Esophagus muscularis mucosa (tissue), 4 donors: ENCODE measurements at regions of chrX and their contacts with region 1.

Region 1: DNA sequence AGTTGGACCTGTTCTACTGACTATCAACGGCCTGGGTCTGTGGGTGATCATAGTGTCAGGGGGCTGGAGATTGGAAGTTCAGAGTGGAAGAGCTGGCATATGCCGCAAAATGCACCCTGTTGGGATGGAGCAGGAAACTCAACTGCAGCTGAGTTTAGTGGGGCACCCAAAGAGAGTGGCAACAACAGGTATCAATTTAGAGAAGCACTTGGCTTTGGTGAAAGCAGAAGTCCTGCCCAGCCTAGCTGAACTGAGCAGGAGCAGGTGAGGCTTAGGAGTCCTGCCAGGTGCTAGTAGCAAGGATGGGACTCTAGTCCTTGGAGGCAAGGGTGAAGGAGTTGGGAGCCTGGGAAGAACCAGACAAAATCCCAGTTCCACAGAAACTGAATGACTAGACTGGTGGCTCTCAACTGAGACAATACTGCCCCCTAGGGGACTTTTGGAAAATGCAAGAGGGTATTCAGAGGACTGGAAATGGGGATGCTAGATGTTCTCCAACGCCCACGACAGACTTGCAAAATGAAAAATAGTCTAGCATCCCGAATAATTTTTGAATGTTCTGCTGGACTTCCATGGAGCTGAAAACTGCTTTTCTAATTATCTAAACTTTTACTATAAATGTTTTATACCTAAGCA is 49.4 kb downstream of the RTL9 start:
- DNase-seq: no peak
- H3K4me3 ChIP-seq: no peak overlapping the region
- H3K27ac ChIP-seq: no peak overlapping the region
- H3K4me1 ChIP-seq: peaks cover 0 to 6% (median 3%) of the 10 kb centered on the region in 4 donors
- H3K27me3 ChIP-seq: peaks cover 0 to 7% (median 0%) of the 10 kb centered on the region in 4 donors
- CTCF ChIP-seq: peak; percentile 63 to 68 (median 63)
- EP300 ChIP-seq: no peak
- POLR2A ChIP-seq: no peak

Region 2: DNA sequence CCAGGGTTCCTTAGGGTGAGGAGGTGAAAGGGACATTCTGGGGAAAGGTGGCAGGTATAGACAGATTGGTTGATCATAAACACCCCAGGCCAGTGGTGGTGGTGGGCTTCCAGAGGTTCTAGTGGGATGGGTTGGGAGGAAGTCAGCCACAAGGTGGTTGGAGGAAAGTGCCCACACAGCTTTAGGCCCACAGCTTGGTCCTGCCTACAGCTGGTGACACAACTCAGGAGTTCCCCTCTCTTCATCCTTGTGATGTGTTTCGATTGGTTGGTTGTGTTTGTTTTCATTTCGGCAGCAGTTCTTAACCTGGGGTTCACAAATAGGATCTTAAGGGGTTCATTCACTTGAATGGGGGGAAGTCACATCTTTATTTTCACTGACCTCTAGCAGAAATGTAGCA is 248.2 kb before region 1 on chrX:
- intact Hi-C with region 1: loop called (anchors 2 kb)
- DNase-seq: no peak
- H3K4me3 ChIP-seq: no peak overlapping the region
- H3K27ac ChIP-seq: no peak overlapping the region
- H3K4me1 ChIP-seq: peaks cover 0 to 7% (median 2%) of the 10 kb centered on the region in 4 donors
- H3K27me3 ChIP-seq: no peaks in the 10 kb centered on the region
- CTCF ChIP-seq: no peak
- EP300 ChIP-seq: no peak
- POLR2A ChIP-seq: no peak

Region 3: DNA sequence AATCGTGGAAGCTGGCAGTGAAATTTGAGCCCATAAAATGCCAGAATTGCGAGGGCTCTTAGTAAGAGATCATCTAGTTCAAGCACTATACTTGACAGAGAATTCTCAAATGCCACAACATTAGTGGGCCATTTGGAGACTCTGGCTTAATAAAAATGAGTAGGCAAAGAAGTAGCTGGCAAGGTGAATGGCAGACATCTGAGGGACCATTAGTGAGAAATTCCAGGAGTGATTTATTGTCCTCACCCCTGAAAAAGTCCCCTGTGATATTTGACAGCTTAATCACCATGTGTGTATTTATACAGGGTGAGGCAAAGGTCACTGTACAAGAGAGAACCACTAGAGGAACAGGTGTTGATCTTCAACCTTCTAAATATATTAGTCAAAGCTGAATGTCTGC is 180.1 kb after region 1 on chrX:
- intact Hi-C with region 1: no loop called
- DNase-seq: no peak
- H3K4me3 ChIP-seq: no peak overlapping the region
- H3K27ac ChIP-seq: no peak overlapping the region
- H3K4me1 ChIP-seq: no peaks in the 10 kb centered on the region
- H3K27me3 ChIP-seq: no peaks in the 10 kb centered on the region
- CTCF ChIP-seq: no peak
- EP300 ChIP-seq: no peak
- POLR2A ChIP-seq: no peak